ENCODE measurements at regions of chr7 and their contacts with region 1.

Region 1: DNA sequence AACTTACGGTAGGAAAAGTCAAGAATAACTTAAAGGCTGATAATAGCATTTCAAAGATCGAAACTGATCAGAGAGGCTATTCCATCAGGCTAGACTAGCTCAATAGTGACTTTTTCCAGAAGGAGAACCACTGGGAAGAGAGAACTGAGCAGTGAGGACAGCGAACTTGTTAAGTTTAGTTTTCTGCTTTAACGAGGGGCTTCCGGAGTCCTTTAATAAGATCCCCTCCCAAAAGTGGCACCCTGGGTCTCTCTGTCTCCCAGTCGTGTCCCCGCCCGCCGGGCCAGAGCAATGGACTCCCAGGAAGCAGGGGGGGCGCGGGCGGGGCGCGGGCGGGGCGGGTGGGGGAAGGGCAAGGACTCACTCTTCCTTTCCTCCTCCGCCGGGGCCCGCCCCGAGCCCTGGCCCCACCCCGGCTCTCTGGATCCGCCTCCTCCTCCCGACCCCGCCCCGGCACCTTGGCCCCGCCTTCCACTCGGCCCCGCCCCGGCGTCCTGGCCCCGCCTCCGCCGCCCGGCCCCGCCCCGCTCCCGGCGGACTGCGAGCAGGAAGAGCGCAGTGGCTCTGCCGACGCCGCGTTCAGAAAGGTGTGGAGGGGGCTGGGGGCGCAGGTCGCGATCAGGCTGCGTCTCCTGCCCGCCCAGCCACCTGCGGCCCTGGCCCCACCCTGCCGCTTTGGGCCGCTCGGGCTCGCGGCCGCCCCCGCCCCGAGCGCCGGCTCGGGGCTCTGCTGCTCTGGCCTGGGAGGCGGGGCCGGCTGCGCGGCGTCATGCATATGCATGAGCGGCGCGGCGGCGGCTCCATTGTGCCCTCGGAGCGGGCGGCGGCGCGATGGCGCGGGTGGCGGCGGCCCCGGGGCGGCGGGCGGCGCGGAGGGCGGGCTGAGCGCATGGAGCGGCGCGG is at the start of gene ZMIZ2:
- DNase-seq: peak; percentile 76
- ATAC-seq: peak; percentile 98
- H3K4me3 ChIP-seq: peak within 1 kb of the TSS; percentile 99
- H3K27ac ChIP-seq: peak within 1 kb of the TSS; percentile 100
- H3K4me1 ChIP-seq: peaks cover 20% of the 10 kb centered on the region
- H3K27me3 ChIP-seq: no peaks in the 10 kb centered on the region
- CTCF ChIP-seq: no peak
- POLR2A ChIP-seq: peak; percentile 82
- RAD21 ChIP-seq: peak; percentile 20; the same call in 1 of the 2 replicates
- total RNA-seq, gene ZMIZ2: 2.8 and 3.0 TPM in 2 replicates

Region 2: GRCh38 chr7:44606450-44607254 is 141.6 kb before region 1 on chr7 and contains the start of gene OGDH:
- CTCF ChIA-PET with region 1: no interaction called
- POLR2A ChIA-PET with region 1: interaction called, 6 read pairs
- dilution Hi-C with region 1: no loop called
- in situ Hi-C with region 1: no loop called
- intact Hi-C with region 1: loop called (anchors 2 kb)
- DNase-seq: peak; percentile 99
- ATAC-seq: peak; percentile 99
- H3K4me3 ChIP-seq: peak within 1 kb of the TSS; percentile 85
- H3K27ac ChIP-seq: peak within 1 kb of the TSS; percentile 85
- H3K4me1 ChIP-seq: no peaks in the 10 kb centered on the region
- H3K27me3 ChIP-seq: no peaks in the 10 kb centered on the region
- CTCF ChIP-seq: no peak
- POLR2A ChIP-seq: peak; percentile 91
- RAD21 ChIP-seq: no peak
- total RNA-seq, gene OGDH: 52.8 and 56.5 TPM in 2 replicates

Region 3: DNA sequence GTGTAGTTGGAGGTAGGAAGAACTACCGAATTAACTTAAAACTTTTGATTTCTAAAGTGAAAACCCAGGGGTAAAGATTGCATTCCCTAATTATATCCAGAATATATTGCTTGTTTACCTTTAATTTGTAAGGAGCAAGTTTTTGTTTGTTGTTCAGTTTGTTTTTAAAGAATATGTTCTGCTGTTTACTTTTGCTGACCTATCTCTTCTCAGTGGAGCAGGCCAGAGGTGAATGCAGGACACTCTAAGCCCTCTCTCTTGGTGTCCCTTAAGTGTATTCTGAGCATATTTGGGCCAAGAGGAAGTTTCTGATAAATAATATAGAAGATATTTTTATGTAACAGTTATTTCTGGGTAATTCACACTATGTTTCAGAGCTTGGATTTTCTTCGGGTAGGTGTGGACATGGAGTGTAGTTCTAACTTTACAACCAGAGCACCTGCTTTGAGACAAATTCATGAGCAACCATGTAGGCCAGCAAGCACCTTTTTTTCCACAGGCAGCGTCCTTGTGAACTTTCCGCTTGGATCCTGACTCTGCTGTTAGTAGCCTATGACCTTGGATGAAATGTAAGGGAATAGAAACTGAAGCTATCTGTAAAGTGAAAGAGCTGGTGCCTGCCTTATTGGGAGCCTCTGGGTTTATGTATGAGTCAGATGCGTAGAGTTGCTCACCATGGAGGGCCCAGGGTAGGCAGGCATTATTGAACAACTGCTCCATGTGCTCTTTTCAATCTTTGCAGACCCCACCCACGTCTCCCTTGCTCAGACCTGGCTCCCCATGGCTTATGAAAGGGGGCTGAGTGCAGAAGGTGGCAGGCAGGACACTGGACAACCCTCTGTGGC is 125.8 kb before region 1 on chr7:
- CTCF ChIA-PET with region 1: no interaction called
- POLR2A ChIA-PET with region 1: no interaction called
- dilution Hi-C with region 1: no loop called
- in situ Hi-C with region 1: no loop called
- intact Hi-C with region 1: no loop called
- DNase-seq: peak; percentile 59
- ATAC-seq: peak; percentile 90
- H3K4me3 ChIP-seq: no peak overlapping the region
- H3K27ac ChIP-seq: no peak overlapping the region
- H3K4me1 ChIP-seq: peaks cover 8% of the 10 kb centered on the region
- H3K27me3 ChIP-seq: no peaks in the 10 kb centered on the region
- CTCF ChIP-seq: no peak
- POLR2A ChIP-seq: no peak
- RAD21 ChIP-seq: no peak

Region 4: DNA sequence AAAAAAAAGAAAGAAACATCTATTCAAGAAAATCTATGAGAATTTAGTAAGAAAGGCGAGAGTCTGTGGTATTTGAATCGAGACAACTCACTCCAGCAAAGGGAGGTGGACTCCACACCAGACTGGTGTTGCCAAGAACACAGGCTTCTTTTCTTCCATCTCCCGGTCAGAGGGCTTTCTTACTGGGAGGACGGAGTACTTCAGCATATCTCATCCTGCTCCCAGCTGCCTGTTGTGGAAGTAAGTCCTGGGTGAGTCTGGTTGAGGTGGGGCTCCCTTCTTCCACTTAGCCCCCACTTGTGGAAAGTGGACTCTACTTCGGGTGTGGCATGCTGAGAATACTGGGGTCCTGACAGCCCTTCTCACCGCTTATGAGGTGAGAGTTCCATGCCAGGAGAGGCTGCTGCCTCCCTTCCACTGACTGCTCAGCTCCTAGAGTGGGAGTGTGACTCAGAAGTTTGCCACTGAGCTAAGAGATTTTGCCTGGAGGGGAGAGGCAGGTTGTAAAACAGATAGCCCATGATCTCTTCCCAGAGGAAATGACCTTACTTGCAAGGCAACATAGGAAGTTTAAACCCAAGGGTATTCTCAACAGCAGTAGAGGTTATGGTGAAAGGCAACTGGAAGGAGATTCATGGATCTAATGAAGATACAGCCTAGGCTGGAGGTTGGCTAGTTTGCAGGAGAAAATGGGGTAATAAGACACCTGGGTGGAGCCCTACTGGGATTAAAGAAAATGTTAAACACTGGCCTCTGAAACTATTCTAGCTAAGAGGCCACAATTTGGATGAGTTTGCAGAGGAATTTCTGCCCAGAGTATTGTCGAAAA is 344.0 kb after region 1 on chr7:
- CTCF ChIA-PET with region 1: no interaction called
- POLR2A ChIA-PET with region 1: no interaction called
- dilution Hi-C with region 1: no loop called
- in situ Hi-C with region 1: no loop called
- intact Hi-C with region 1: no loop called
- DNase-seq: peak; percentile 52
- ATAC-seq: peak; percentile 33; the same call in 1 of the 2 replicates
- H3K4me3 ChIP-seq: no peak overlapping the region
- H3K27ac ChIP-seq: no peak overlapping the region
- H3K4me1 ChIP-seq: peaks cover 4% of the 10 kb centered on the region; the same call in 1 of the 2 replicates
- H3K27me3 ChIP-seq: no peaks in the 10 kb centered on the region
- CTCF ChIP-seq: no peak
- POLR2A ChIP-seq: no peak
- RAD21 ChIP-seq: no peak

Measured in IMR-90 (cell line).